Activated CD4-positive, alpha-beta T cell treated with anti-CD3 and anti-CD28 coated beads, Interleukin-2, amount 10 ng/mL, durations not matched to agents 7 days and 5 days (primary cell): ENCODE measurements at regions of chr11 and their contacts with region 1.

Region 1: DNA sequence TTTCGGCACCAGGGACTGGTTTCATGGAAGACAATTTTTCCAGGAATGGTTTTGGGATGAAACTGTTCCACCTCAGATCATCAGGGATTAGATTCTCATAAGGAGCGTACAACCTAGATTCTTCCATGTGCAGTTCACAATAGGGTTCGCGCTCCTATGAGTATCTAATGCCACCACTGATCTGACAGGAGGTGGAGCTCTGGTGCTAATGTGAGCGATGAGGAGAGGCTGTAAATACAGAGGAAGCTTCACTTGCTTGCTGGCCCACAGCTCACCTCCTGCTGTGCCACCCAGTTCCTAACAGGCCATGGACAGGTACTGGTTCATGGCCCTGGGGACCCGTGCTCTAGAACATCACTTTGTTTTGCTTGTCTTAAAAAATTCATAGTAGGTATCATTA is 41.8 kb upstream of the AMPD3 start:
- DNase-seq: peak; percentile 72
- H3K4me3 Mint-ChIP-seq: no peak overlapping the region
- H3K27ac Mint-ChIP-seq: no peak overlapping the region
- H3K4me1 Mint-ChIP-seq: peaks cover 49% of the 10 kb centered on the region
- H3K27me3 Mint-ChIP-seq: peaks cover 4% of the 10 kb centered on the region

Region 2: DNA sequence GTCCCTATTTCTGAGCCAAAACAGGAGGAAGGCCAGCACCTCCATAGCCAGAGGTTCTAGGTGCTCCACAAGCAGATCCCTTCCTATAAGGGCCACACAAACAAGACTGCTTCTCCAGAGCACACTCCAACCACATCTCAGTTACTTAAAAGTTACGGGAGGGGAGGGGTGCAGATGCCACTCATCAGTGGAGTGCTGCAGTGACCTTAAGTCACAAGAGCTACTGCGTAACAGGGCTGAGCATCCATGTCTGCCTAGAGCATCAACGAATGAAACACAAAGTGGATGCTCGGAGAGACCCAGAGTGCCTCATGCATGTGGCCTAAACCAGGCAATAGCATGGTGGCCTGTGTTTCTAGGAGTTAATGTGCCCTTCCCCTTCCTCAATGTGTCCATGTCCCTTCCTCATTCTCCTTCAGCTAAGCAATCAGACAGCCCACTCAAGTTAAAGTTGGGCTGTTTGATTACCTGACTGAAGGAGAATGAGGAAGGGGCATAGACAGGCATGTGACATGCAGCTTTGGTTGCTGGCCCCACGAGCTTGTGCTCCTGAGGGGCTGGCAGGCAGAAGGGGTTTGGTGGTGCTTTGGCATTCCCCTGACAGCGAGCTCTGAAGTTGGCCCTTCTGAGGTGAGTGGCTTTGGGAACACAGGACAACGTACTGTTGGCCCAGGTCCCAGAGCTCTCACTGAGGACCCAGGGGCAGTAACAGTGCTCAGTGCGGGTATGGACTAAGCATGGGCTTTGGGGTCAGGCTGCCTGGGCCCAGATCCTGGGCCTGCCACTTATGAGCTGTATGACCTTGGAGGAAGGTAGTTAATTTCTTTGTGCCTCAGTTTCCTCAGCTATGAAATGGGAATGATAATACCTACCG is 233.5 kb after region 1 on chr11:
- CTCF ChIA-PET with region 1: interaction called, 12 read pairs
- POLR2A ChIA-PET with region 1: no interaction called
- DNase-seq: no peak
- H3K4me3 Mint-ChIP-seq: no peak overlapping the region
- H3K27ac Mint-ChIP-seq: no peak overlapping the region
- H3K4me1 Mint-ChIP-seq: peaks cover 6% of the 10 kb centered on the region
- H3K27me3 Mint-ChIP-seq: no peaks in the 10 kb centered on the region